Dorsolateral prefrontal cortex (tissue), 120 donors: ENCODE measurements at regions of chr5 and their contacts with region 1.

Region 1: GRCh38 chr5:126594676-126595485 is at the start of gene ALDH7A1:
- DNase-seq: peak; percentile 73 to 87 (median 84)
- H3K4me3 ChIP-seq: peak within 1 kb of the TSS; percentile 50 to 94 (median 76)
- H3K27ac ChIP-seq: peak within 1 kb of the TSS in 57 of 59 donors; percentile 16 to 93 (median 80)
- H3K27me3 ChIP-seq: no peaks in the 10 kb centered on the region
- CTCF ChIP-seq: peak; percentile 19 to 73 (median 56)
- total RNA-seq, gene ALDH7A1: 54.8 to 188 (median 92.2) TPM

Region 2: DNA sequence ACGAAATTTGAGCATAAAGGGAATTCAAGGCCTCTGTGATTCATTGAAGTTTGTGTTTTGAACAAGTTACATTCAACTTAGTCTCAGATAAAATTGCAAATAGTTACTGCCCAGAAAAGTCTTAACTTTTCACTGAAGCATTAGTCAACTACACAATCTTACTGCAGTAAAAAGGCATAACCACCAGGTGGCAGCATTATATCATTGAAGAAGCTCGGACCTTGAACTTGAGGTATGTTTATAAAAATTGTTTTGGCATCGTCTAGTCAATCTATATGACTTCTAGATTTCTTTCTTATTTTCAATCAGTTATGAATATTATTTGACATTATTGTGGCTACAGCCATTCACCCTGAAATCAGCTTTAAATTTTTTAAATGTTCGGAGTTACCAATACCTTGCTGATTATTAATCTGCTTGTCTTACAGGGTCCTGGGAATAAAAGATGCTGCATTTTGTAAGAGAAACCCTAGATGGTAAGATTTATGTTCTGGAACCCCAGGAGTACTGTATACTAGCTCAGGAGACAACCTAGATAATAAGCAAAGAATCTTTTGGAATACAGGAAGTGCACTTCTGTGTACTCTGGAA is 255.6 kb before region 1 on chr5:
- intact Hi-C with region 1: loop called (anchors 2 to 5 kb)
- DNase-seq: peak in 3 of 10 donors; percentile 22 to 55 (median 52)
- H3K4me3 ChIP-seq: no peak overlapping the region
- H3K27ac ChIP-seq: no peak overlapping the region
- H3K27me3 ChIP-seq: peaks cover 0 to 4% (median 0%) of the 10 kb centered on the region in 45 donors
- CTCF ChIP-seq: peak; percentile 77 to 99 (median 93)

Region 3: GRCh38 chr5:126449751-126450271 is 145.1 kb before region 1 on chr5:
- intact Hi-C with region 1: loop called in 1 of 2 experiments (anchors 5 kb)
- DNase-seq: no peak
- H3K4me3 ChIP-seq: peak overlapping the region in 26 of 59 donors; percentile 1 to 39 (median 12)
- H3K27ac ChIP-seq: peak overlapping the region; percentile 19 to 98 (median 90)
- H3K27me3 ChIP-seq: no peaks in the 10 kb centered on the region
- CTCF ChIP-seq: peak in 1 of 56 donors; percentile 7

Region 4: DNA sequence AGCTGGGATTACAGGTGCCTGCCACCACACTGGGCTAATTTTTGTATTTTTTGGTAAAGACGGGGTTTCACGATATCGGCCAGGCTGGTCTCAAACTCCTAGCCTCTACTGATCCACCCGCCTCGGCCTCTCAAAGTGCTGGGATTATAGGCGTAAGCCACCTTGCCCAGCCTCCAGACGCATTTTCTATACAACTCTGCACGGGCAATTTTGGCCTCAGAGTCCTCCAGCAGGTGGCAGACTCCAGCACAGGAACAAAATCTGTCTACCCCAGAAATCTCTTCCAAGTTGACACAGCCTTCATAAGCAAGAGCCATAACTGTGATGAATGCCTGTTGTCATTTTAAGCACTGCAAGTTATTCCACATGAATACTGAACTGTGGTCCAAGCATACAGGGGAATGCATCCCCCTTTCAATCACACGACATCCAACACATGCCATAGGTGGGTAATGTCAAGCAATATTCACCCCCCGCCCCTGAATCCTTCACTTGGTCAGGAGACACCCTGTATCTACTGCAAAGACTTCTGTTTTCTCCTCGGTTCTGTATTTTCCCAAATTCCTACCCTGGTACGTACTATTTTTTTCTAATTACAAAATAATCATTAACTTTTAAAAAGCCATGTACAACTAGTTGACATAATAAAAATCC is 50.7 kb before region 1 on chr5:
- intact Hi-C with region 1: loop called (anchors 5 kb)
- DNase-seq: peak in 4 of 10 donors; percentile 44 to 54 (median 48)
- H3K4me3 ChIP-seq: no peak overlapping the region
- H3K27ac ChIP-seq: no peak overlapping the region
- H3K27me3 ChIP-seq: no peaks in the 10 kb centered on the region
- CTCF ChIP-seq: peak in 52 of 56 donors; percentile 9 to 63 (median 47)